ENCODE measurements at regions of chr11 and their contacts with region 1.

Region 1: GRCh38 chr11:133269267-133269666 is 263.0 kb downstream of the OPCML start:
- DNase-seq: no peak
- H3K4me3 ChIP-seq: no peak overlapping the region
- H3K27ac ChIP-seq: no peak overlapping the region
- H3K4me1 ChIP-seq: no peaks in the 10 kb centered on the region
- H3K27me3 ChIP-seq: peaks cover 2% of the 10 kb centered on the region
- CTCF ChIP-seq: no peak

Region 2: GRCh38 chr11:133038850-133039249 is 230.4 kb before region 1 on chr11:
- CTCF ChIA-PET with region 1: no interaction called
- dilution Hi-C with region 1: no loop called
- in situ Hi-C with region 1: no loop called
- intact Hi-C with region 1: no loop called
- DNase-seq: no peak
- H3K4me3 ChIP-seq: no peak overlapping the region
- H3K27ac ChIP-seq: no peak overlapping the region
- H3K4me1 ChIP-seq: peaks cover 23% of the 10 kb centered on the region
- H3K27me3 ChIP-seq: no peaks in the 10 kb centered on the region
- CTCF ChIP-seq: no peak

Region 3: DNA sequence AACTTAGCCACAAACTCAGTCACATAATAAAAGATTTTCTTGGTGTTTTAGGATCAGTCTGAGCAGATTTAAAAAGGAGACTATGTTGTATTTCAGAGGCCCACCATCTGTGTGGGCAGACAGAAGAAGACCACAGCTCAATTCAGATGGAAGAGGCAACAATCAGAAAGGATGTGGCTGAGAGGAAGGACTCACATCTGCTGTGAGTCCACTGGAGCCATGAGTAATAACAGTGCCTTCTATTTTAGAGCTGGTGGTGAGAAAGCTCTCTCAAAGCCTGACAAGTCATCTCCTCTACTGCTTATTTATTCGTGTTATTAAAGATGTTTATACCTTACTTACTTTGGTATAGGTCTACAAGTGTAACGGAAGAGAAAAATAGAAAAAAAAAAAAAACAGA is 94.2 kb before region 1 on chr11:
- CTCF ChIA-PET with region 1: no interaction called
- dilution Hi-C with region 1: no loop called
- in situ Hi-C with region 1: no loop called
- intact Hi-C with region 1: no loop called
- DNase-seq: no peak
- H3K4me3 ChIP-seq: no peak overlapping the region
- H3K27ac ChIP-seq: no peak overlapping the region
- H3K4me1 ChIP-seq: no peaks in the 10 kb centered on the region
- H3K27me3 ChIP-seq: no peaks in the 10 kb centered on the region
- CTCF ChIP-seq: no peak

Region 4: GRCh38 chr11:133228471-133229329 is 40.6 kb before region 1 on chr11:
- CTCF ChIA-PET with region 1: no interaction called
- dilution Hi-C with region 1: no loop called
- in situ Hi-C with region 1: no loop called
- intact Hi-C with region 1: no loop called
- DNase-seq: no peak
- H3K4me3 ChIP-seq: no peak overlapping the region
- H3K27ac ChIP-seq: no peak overlapping the region
- H3K4me1 ChIP-seq: no peaks in the 10 kb centered on the region
- H3K27me3 ChIP-seq: no peaks in the 10 kb centered on the region
- CTCF ChIP-seq: no peak

Region 5: DNA sequence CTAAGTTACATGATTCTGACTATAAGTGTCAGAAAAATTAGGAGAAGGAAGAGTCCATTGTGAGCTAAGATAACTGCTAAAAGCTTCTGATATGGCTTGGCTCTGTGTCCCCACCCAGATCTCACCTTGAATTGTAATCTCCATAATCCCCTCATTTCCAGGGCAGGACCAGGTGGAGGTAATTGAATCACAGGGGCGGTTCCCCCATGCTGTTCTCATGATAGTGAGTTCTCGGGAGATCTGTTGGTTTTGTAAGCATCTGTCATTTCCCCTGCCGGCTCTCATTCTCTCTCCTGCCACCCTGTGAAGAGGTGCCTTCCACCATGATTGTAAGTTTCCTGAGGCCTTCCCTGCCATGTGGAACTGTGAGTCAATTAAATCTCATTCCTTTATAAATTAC is 32.8 kb after region 1 on chr11:
- CTCF ChIA-PET with region 1: no interaction called
- dilution Hi-C with region 1: loop called (anchors 5 kb)
- in situ Hi-C with region 1: no loop called
- intact Hi-C with region 1: no loop called
- DNase-seq: no peak
- H3K4me3 ChIP-seq: no peak overlapping the region
- H3K27ac ChIP-seq: no peak overlapping the region
- H3K4me1 ChIP-seq: no peaks in the 10 kb centered on the region
- H3K27me3 ChIP-seq: no peaks in the 10 kb centered on the region
- CTCF ChIP-seq: no peak

Measured in mammary epithelial cell (primary cell).